MCF 10A (cell line): ENCODE measurements at regions of chr5 and their contacts with region 1.

Region 1: DNA sequence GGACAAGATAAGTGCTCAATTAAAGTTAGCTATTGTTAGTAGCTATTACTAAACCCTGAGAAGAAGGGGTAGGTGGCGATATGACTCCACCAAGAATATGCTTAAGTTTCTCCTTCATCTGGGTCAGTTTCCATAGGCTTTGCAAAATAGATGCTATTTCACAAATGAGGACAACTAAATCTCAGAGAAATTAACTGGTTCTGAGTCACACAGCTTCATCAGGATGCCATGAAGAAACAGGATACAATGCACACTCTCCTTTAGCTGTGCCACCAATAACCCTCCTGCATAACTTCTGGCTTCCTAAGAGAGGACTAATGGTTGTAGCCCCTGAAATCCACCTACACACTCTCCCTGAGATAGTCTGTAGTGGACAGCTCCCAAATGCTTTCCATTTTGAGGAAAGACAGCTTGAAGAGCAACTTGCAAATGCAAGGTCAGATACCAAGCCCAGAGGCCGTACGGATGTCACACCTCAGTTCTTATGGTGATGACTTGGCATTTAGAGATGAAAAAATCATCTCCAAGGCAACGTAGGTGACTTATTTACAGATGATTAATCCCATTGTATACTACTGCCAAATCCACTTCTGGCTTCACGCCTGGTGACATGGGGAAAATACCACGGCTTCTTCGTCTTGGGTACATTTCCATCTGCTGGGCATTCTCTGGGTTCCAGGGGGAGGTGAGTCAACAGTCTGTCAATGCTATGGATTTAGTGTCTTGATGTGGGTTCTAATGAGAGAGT is 251.4 kb upstream of the IL12B start:
- DNase-seq: peak; percentile 100
- H3K4me3 Mint-ChIP-seq: no peak overlapping the region
- H3K27ac Mint-ChIP-seq: peak overlapping the region; percentile 91
- H3K4me1 Mint-ChIP-seq: peaks cover 29% of the 10 kb centered on the region
- H3K27me3 Mint-ChIP-seq: no peaks in the 10 kb centered on the region
- CTCF ChIP-seq: no peak

Region 2: DNA sequence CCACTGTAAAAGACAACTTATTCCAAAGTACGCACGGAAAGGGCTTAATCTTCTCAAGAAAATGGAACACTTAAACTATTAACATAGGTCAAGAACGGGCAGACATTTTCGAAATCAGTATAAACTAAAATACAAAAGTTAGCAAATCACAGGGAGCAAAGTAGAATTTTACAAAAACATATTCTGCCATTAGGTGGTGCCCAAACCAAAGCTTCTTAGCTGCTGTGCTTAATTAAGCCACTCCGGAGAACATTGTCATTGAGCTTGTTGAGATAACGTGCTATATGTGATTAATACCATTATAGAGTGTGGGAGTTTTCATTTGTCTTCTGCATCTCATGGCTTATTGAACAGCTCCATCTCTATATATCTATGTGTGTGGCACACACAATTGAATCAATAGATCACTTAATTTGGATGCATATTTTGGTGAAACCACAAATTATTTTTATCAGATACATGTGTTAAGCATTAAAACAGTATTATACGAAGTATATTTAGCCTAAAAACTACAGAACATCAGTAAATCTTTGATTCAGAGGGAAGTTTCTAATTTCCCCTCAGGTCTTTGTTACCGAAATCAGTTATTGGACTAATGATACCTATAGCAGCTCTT is 295.1 kb before region 1 on chr5:
- CTCF ChIA-PET with region 1: interaction called, 7 read pairs
- POLR2A ChIA-PET with region 1: no interaction called
- intact Hi-C with region 1: loop called (anchors 2 kb)
- DNase-seq: peak; percentile 62
- H3K4me3 Mint-ChIP-seq: no peak overlapping the region
- H3K27ac Mint-ChIP-seq: no peak overlapping the region
- H3K4me1 Mint-ChIP-seq: no peaks in the 10 kb centered on the region
- H3K27me3 Mint-ChIP-seq: no peaks in the 10 kb centered on the region
- CTCF ChIP-seq: peak; percentile 67

Region 3: GRCh38 chr5:159593518-159594073 is 11.9 kb after region 1 on chr5:
- CTCF ChIA-PET with region 1: interaction called, 10 read pairs
- POLR2A ChIA-PET with region 1: interaction called, 4 read pairs
- intact Hi-C with region 1: no loop called
- DNase-seq: no peak
- H3K4me3 Mint-ChIP-seq: no peak overlapping the region
- H3K27ac Mint-ChIP-seq: no peak overlapping the region
- H3K4me1 Mint-ChIP-seq: peaks cover 6% of the 10 kb centered on the region
- H3K27me3 Mint-ChIP-seq: no peaks in the 10 kb centered on the region
- CTCF ChIP-seq: no peak

Region 4: GRCh38 chr5:159667286-159667685 is 85.6 kb after region 1 on chr5:
- CTCF ChIA-PET with region 1: no interaction called
- POLR2A ChIA-PET with region 1: no interaction called
- intact Hi-C with region 1: no loop called
- DNase-seq: no peak
- H3K4me3 Mint-ChIP-seq: no peak overlapping the region
- H3K27ac Mint-ChIP-seq: no peak overlapping the region
- H3K4me1 Mint-ChIP-seq: no peaks in the 10 kb centered on the region
- H3K27me3 Mint-ChIP-seq: no peaks in the 10 kb centered on the region
- CTCF ChIP-seq: no peak

Region 5: DNA sequence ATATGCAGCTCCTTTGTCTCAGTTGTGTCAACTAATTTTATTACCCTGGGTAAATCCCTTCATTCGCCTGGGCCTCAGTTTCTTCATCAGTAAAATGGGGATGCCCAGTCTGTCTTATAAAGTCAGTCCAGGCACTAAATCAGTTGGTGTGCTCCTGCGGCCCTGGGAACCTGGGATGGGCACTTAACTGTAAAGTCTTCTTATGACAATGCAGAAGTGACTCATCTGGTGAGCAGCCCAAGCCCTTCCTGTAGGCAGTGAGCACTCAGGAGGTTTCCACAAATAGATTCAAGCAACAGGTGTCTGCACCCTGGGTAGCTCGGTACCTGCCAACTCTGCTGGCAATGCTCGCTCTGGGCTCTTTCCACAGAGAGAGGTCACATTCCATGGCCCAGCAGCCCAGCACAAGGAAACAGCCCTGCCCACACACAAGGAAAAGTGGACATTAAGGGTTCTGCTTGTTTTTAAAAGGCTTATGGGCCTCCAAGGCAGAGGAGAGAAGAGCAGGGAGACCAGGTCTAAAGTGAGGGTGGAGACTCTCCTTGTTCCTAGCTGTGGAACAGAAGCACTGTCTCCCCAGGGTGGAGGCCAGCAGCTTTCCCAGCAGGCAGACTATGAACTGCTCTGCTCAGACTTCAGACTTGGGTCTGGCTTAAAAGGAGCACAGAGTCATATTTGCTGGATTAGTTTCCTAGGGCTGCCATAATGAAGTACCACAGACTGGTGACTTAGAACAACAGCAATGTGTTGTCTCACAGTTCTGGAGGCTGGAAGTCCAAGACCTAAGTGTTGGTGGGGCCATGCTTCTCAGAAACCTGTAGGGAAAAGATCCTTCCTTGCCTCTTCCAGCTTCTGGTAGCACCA is 244.9 kb after region 1 on chr5:
- CTCF ChIA-PET with region 1: no interaction called
- POLR2A ChIA-PET with region 1: no interaction called
- intact Hi-C with region 1: loop called (anchors 2 kb)
- DNase-seq: peak; percentile 98
- H3K4me3 Mint-ChIP-seq: peak overlapping the region; percentile 5
- H3K27ac Mint-ChIP-seq: peak overlapping the region; percentile 70
- H3K4me1 Mint-ChIP-seq: peaks cover 35% of the 10 kb centered on the region
- H3K27me3 Mint-ChIP-seq: no peaks in the 10 kb centered on the region
- CTCF ChIP-seq: no peak

Region 6: GRCh38 chr5:159965031-159965837 is 383.6 kb after region 1 on chr5:
- CTCF ChIA-PET with region 1: interaction called, 17 read pairs
- POLR2A ChIA-PET with region 1: interaction called, 3 read pairs
- intact Hi-C with region 1: loop called (anchors 1 kb)
- DNase-seq: peak; percentile 86
- H3K4me3 Mint-ChIP-seq: no peak overlapping the region
- H3K27ac Mint-ChIP-seq: no peak overlapping the region
- H3K4me1 Mint-ChIP-seq: peaks cover 7% of the 10 kb centered on the region
- H3K27me3 Mint-ChIP-seq: no peaks in the 10 kb centered on the region
- CTCF ChIP-seq: peak; percentile 87